Heart left ventricle (tissue), 16 donors: ENCODE measurements at regions of chr1 and their contacts with region 1.

Region 1: DNA sequence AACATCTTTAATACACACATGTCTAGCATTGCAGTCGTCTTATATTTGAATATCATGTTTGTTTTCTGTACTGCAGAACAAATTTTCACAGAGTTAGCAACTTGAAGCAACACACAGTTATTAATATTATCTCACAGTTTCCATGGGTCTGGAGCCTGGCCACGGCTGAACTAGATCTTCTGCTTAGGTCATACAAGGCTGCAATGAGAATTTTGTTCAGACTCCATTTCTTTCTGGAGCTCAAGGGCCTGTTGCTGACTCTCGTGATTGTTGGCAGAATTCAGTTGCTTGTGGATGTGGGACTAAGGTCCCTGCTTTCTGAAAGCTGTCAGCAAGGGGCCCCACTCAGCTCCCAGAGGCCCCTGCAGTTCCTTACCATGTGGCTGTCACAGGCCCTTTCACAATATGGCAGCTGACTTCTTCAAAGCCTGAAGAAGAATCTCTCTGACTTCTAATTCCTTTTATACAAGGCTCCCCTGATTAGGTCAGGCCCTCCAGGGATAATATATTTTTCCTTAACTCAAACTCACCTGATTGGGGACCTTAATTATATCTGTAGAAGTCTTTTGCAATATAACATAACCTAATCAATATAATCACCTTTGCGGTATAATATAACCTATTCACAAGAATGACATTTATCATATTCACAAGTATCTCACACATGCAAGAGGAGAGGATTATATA is 296.3 kb downstream of the NFIA start:
- DNase-seq: peak in 1 of 5 donors; percentile 26
- ATAC-seq: peak in 2 of 4 donors; percentile 30 to 39
- H3K4me3 ChIP-seq: no peak overlapping the region
- H3K27ac ChIP-seq: peak overlapping the region in 11 of 12 donors; percentile 3 to 74 (median 33)
- H3K4me1 ChIP-seq: peaks cover 0 to 38% (median 13%) of the 10 kb centered on the region in 12 donors
- H3K27me3 ChIP-seq: no peaks in the 10 kb centered on the region
- CTCF ChIP-seq: no peak
- POLR2A ChIP-seq: no peak

Region 2: DNA sequence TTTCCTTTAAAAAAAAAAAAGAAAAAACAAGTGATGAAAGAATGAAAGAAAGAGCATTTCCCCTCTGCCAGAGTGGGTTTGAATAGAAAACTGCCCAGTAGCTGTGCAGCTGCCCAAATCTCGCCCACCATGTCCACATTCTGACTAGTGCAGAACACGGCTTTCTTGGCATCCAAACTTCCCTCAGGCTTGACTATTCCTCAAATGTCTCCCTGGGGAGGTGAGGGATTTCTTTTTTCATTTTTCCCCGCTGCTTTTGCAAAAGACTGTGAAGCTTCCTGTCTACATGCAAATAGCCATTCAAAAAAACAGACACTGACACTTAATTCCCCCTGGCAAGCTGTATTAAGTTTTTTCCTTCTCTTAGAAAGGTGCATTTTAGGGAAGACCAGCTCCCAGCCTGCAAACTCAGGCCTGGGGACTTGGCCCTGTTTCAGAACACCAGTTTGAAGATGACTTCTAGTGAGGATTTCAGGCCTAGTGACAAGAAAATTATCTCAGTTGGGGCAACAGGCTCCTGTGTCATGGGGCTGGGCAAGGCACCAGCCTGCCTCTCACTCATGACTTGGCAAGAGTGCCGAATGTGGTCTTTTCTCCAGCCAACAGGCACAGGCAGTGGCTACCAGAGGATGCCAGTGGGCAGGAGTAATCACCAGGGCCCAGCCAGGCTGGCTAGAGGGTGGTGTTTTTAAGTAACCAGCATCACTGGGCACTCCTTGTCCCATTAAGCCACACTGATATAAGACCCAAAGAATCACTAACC is 474.4 kb before region 1 on chr1:
- intact Hi-C with region 1: loop called in 1 of 10 experiments (anchors 5 kb)
- DNase-seq: peak; percentile 71 to 85 (median 73)
- ATAC-seq: peak; percentile 82 to 95 (median 92)
- H3K4me3 ChIP-seq: peak overlapping the region in 1 of 12 donors; percentile 12
- H3K27ac ChIP-seq: peak overlapping the region; percentile 27 to 92 (median 86)
- H3K4me1 ChIP-seq: peaks cover 0 to 51% (median 25%) of the 10 kb centered on the region in 12 donors
- H3K27me3 ChIP-seq: no peaks in the 10 kb centered on the region
- CTCF ChIP-seq: no peak
- POLR2A ChIP-seq: no peak

Region 3: DNA sequence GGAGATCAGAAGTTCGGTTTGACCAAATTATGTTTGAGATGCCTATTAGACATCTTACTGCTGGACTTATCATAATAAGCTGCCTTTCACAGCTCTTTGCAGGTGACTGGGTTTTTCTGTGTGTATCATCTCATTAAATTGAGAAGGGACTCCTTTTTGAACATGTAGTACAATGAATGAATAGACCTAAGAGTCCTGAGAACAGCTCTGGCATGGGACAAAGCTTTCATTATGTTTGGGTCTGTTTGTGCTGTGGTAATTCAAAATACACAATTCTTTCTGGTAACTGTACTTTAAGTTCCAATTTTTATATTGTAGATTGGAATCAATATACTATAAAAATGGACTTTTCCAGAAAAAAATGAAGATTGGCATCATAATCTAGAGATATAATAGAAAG is 34.0 kb after region 1 on chr1:
- intact Hi-C with region 1: no loop called
- DNase-seq: no peak
- ATAC-seq: no peak
- H3K4me3 ChIP-seq: no peak overlapping the region
- H3K27ac ChIP-seq: no peak overlapping the region
- H3K4me1 ChIP-seq: no peaks in the 10 kb centered on the region
- H3K27me3 ChIP-seq: no peaks in the 10 kb centered on the region
- CTCF ChIP-seq: no peak
- POLR2A ChIP-seq: no peak